ENCODE measurements at regions of chr14 and their contacts with region 1.

Region 1: GRCh38 chr14:72516936-72517700 is 376.8 kb downstream of the DPF3 start:
- DNase-seq: peak; percentile 68
- H3K4me3 Mint-ChIP-seq: no peak overlapping the region
- H3K27ac Mint-ChIP-seq: no peak overlapping the region
- H3K4me1 Mint-ChIP-seq: no peaks in the 10 kb centered on the region
- H3K27me3 Mint-ChIP-seq: peaks cover under 1% of the 10 kb centered on the region
- CTCF ChIP-seq: peak; percentile 76

Region 2: GRCh38 chr14:71891970-71892369 is 625.1 kb before region 1 on chr14:
- CTCF ChIA-PET with region 1: no interaction called
- POLR2A ChIA-PET with region 1: no interaction called
- intact Hi-C with region 1: no loop called
- DNase-seq: no peak
- H3K4me3 Mint-ChIP-seq: no peak overlapping the region
- H3K27ac Mint-ChIP-seq: no peak overlapping the region
- H3K4me1 Mint-ChIP-seq: no peaks in the 10 kb centered on the region
- H3K27me3 Mint-ChIP-seq: no peaks in the 10 kb centered on the region
- CTCF ChIP-seq: no peak

Region 3: DNA sequence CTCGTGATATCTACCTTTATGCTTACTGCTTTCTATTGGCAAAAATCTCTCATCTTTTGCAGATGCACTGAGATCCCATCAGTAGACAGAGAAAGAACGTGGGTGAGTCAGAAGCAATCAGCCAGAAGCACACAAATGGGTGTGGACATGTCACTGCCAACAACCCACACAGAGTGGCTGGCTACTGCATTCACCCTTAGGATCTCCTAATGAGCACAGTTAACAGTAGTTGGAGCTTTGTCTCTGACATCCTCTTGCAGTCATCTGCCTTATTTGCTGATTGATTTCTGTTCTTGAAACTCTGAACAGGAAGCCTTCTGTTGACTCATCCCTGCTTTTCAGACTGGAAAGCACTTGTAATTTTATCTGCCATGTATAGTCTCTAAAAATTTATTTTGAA is 467.7 kb before region 1 on chr14:
- CTCF ChIA-PET with region 1: no interaction called
- POLR2A ChIA-PET with region 1: no interaction called
- intact Hi-C with region 1: no loop called
- DNase-seq: peak; percentile 38
- H3K4me3 Mint-ChIP-seq: no peak overlapping the region
- H3K27ac Mint-ChIP-seq: no peak overlapping the region
- H3K4me1 Mint-ChIP-seq: no peaks in the 10 kb centered on the region
- H3K27me3 Mint-ChIP-seq: peaks cover 40% of the 10 kb centered on the region
- CTCF ChIP-seq: no peak

Region 4: DNA sequence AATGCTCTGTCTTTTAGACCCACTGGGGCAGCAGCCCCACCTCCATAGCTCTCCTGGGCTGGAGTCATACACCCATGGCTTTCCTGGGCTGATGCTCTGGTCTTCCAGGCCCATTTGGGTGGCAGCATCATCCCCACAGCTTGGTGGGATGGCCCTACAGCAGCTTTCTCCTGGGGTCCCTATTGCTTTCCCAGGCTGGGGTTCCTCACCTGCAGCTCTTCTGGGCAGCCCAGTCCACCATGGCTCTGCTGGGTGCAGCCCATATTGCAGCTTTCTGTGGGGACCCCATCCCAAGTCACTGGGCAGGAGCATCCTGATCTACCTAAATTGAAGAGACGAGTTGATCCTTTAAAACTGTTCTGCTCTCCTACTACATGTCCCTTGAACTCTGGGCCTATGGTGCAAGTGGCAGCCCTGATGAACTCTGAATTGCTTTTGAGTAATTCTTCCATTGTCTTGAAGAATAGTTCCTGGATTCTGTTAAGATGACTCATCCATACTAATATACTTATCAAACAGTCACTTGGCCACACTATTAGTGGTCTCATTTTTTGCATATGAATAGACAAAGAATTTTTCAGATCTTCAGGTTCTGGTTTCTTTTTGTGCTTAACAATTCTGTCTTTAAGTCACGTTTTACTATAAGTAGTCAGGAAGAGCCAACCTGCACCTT is 13.3 kb before region 1 on chr14:
- CTCF ChIA-PET with region 1: interaction called, 17 read pairs
- POLR2A ChIA-PET with region 1: no interaction called
- intact Hi-C with region 1: no loop called
- DNase-seq: no peak
- H3K4me3 Mint-ChIP-seq: no peak overlapping the region
- H3K27ac Mint-ChIP-seq: no peak overlapping the region
- H3K4me1 Mint-ChIP-seq: no peaks in the 10 kb centered on the region
- H3K27me3 Mint-ChIP-seq: no peaks in the 10 kb centered on the region
- CTCF ChIP-seq: no peak

Region 5: DNA sequence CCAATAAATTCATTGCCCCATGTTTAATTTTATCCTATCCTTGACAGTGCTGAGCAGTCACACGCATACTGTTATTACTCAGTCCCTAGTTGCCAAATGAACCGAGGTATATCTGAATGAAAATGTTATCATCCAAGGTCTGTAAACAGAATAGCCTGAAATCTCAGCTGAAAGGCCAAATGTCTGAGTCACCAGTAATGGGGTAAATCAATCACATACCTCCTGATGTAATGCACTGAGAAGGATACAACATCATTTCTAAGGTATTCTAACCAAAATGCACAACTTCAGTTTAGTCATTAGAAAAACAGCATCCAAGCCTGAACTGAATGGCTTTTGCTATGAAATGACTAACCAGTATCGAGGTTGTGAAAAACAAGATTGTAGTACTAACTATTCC is 148.1 kb after region 1 on chr14:
- CTCF ChIA-PET with region 1: no interaction called
- POLR2A ChIA-PET with region 1: no interaction called
- intact Hi-C with region 1: loop called (anchors 10 kb)
- DNase-seq: peak; percentile 82
- H3K4me3 Mint-ChIP-seq: no peak overlapping the region
- H3K27ac Mint-ChIP-seq: peak overlapping the region; percentile 76
- H3K4me1 Mint-ChIP-seq: peaks cover 30% of the 10 kb centered on the region
- H3K27me3 Mint-ChIP-seq: no peaks in the 10 kb centered on the region
- CTCF ChIP-seq: no peak

Region 6: DNA sequence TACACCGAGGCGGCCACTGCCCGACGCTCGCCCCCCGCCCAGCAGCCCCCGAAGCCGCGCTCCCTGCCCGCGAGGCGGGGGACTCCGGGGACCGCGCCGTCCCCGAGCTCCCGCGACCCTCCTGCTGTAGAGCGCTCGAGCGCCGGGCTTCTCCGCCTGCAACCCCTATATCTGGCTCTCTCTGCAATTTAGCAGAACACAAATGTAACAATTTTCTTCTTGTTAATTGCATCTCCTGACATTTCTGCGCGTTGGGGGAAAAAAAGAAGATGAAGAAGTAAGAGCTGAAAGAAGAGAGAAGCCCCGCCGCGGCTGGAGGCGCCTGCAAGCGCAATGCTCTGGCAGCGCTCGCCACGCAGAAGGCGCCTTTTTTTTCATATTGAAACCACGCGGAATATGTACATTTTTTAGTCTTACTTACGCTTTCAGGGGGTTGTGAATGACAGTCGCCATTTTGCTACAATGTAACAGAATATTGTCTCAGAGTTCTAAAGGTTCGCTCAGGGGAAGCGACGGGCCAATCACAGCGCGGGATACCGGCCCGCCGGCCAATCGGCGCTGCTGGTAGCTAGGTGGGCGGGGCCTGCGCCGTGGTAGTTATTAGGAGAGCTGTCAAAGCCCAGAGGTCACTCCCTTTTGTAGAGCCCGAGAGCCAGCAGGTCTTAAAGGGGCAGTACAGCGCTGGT is 376.7 kb after region 1 on chr14 and contains the start of gene DPF3:
- CTCF ChIA-PET with region 1: interaction called, 33 read pairs
- POLR2A ChIA-PET with region 1: interaction called, 9 read pairs
- intact Hi-C with region 1: no loop called
- DNase-seq: peak; percentile 97
- H3K4me3 Mint-ChIP-seq: peak within 1 kb of the TSS; percentile 82
- H3K27ac Mint-ChIP-seq: peak within 1 kb of the TSS; percentile 37
- H3K4me1 Mint-ChIP-seq: no peaks in the 10 kb centered on the region
- H3K27me3 Mint-ChIP-seq: no peaks in the 10 kb centered on the region
- CTCF ChIP-seq: no peak
- total RNA-seq, gene DPF3: 1.9 and 2.1 TPM in 2 replicates

Region 7: GRCh38 chr14:73058224-73058921 is 541.3 kb after region 1 on chr14 and contains the start of gene RBM25:
- CTCF ChIA-PET with region 1: no interaction called
- POLR2A ChIA-PET with region 1: interaction called, 4 read pairs
- intact Hi-C with region 1: loop called (anchors 5 kb)
- DNase-seq: peak; percentile 99
- H3K4me3 Mint-ChIP-seq: no peak within 1 kb of the TSS
- H3K27ac Mint-ChIP-seq: no peak within 1 kb of the TSS
- H3K4me1 Mint-ChIP-seq: no peaks in the 10 kb centered on the region
- H3K27me3 Mint-ChIP-seq: no peaks in the 10 kb centered on the region
- CTCF ChIP-seq: no peak
- total RNA-seq, gene RBM25: 106 and 107 TPM in 2 replicates

Measured in MCF 10A (cell line).